Natural killer cell (primary cell): ENCODE measurements at regions of chr1 and their contacts with region 1.

Region 1: DNA sequence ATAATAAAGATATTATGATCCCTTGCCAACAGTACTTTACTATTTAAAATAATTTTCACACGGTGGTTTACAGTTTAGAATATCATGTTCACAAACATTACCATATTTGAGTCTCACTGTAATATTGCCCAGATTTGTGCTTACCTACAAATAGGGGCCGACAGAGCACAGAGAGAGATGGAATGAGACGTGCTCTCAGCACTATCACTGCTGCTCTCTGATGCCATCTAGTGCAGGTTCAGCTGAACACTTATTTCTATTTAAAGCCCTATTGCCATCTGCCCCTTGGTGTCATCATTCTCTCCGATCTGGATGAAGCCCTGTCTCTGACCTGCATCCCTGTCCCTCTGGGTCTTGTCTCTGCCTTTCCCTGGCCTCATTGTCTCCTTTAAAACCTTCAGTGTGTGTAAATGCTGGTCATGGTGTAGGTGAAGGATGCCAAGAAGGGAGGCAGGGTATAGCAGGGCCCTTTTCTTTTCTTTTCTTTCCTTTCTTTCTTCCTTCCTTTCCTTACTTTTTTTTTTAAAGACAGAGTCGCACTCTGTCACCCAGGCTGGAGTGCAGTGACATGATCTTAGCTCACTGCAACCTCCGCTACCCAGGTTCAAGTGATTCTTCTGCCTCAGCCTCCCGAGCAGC is 6.9 kb upstream of the GPATCH4 start:
- DNase-seq: peak; percentile 36 to 89
- ATAC-seq: peak; percentile 92 to 99 (median 98)
- H3K4me3 ChIP-seq: no peak overlapping the region
- H3K4me3 Mint-ChIP-seq: no peak overlapping the region
- H3K27ac ChIP-seq: no peak overlapping the region
- H3K27ac Mint-ChIP-seq: no peak overlapping the region
- H3K4me1 ChIP-seq: peaks cover 6% of the 10 kb centered on the region
- H3K4me1 Mint-ChIP-seq: peaks cover 8 to 9% of the 10 kb centered on the region in 2 donors
- H3K27me3 ChIP-seq: no peaks in the 10 kb centered on the region
- H3K27me3 Mint-ChIP-seq: peaks cover 3 to 6% of the 10 kb centered on the region in 2 donors
- CTCF ChIP-seq: peak; percentile 87

Region 2: GRCh38 chr1:156385534-156386031 is 222.6 kb before region 1 on chr1:
- intact Hi-C with region 1: loop called (anchors 1 kb)
- DNase-seq: peak; percentile 53 to 89
- ATAC-seq: peak; percentile 66 to 76 (median 73)
- H3K4me3 ChIP-seq: no peak overlapping the region
- H3K4me3 Mint-ChIP-seq: no peak overlapping the region
- H3K27ac ChIP-seq: no peak overlapping the region
- H3K27ac Mint-ChIP-seq: no peak overlapping the region
- H3K4me1 ChIP-seq: peaks cover 9% of the 10 kb centered on the region
- H3K4me1 Mint-ChIP-seq: peaks cover 8% of the 10 kb centered on the region in 2 donors
- H3K27me3 ChIP-seq: peaks cover 11% of the 10 kb centered on the region
- H3K27me3 Mint-ChIP-seq: peaks cover 20 to 32% of the 10 kb centered on the region in 2 donors
- CTCF ChIP-seq: peak; percentile 88

Region 3: GRCh38 chr1:156456622-156457465 is 151.3 kb before region 1 on chr1:
- intact Hi-C with region 1: loop called (anchors 1 kb)
- DNase-seq: peak; percentile 93 to 100
- ATAC-seq: peak; percentile 86 to 97 (median 87)
- H3K4me3 ChIP-seq: peak overlapping the region; percentile 86
- H3K4me3 Mint-ChIP-seq: peak overlapping the region; percentile 95
- H3K27ac ChIP-seq: peak overlapping the region; percentile 98
- H3K27ac Mint-ChIP-seq: peak overlapping the region; percentile 97 to 99
- H3K4me1 ChIP-seq: peaks cover 19% of the 10 kb centered on the region
- H3K4me1 Mint-ChIP-seq: peaks cover 11 to 20% of the 10 kb centered on the region in 2 donors
- H3K27me3 ChIP-seq: no peaks in the 10 kb centered on the region
- H3K27me3 Mint-ChIP-seq: no peaks in the 10 kb centered on the region
- CTCF ChIP-seq: no peak

Region 4: GRCh38 chr1:156480411-156481192 is 127.6 kb before region 1 on chr1:
- intact Hi-C with region 1: loop called (anchors 1 kb)
- DNase-seq: peak; percentile 68 to 91
- ATAC-seq: peak; percentile 80 to 89 (median 86)
- H3K4me3 ChIP-seq: no peak overlapping the region
- H3K4me3 Mint-ChIP-seq: peak overlapping the region; percentile 58
- H3K27ac ChIP-seq: peak overlapping the region; percentile 13
- H3K27ac Mint-ChIP-seq: peak overlapping the region; percentile 90 to 93
- H3K4me1 ChIP-seq: peaks cover 34% of the 10 kb centered on the region
- H3K4me1 Mint-ChIP-seq: peaks cover 37 to 61% of the 10 kb centered on the region in 2 donors
- H3K27me3 ChIP-seq: no peaks in the 10 kb centered on the region
- H3K27me3 Mint-ChIP-seq: no peaks in the 10 kb centered on the region
- CTCF ChIP-seq: peak; percentile 82

Region 5: DNA sequence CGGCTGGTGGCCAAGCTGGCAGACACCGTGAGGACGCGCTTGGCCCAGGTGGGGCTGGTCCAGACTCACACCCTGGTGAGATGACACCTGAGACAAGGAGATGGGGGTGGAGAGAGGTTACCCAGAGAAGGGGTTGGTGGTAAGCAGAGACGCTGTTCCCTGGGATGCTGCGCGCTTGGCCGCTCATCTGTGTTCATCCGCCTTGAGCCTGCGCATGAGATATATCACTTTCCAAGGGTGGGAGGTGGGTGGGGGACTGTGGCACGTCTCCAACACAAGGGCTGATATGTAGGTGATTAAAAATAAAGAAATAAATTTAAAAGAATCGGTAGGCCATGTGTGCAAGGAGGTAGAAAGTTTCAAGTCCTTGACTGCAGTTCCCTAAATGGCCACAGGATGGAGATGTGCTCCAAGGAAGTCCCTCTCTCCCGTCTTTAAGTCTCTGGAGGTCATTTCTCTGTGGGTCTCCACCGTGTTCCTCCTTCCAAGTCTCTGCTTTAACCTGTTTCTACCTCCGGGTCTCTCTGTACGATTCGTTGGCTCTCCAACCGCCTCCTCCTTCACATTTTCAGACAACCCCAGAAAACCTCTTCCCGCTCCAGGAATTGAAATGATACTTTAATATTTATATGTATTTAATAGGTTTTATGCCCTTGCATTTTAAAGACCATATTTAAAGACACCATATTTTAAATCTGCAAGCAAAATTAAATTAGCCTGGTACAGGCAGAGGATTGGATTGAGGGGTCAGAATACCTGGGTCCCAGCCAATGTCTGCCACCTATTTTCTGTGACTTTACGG is 24.1 kb before region 1 on chr1:
- intact Hi-C with region 1: loop called (anchors 1 kb)
- DNase-seq: peak; percentile 60 to 92
- ATAC-seq: peak; percentile 73 to 88 (median 82)
- H3K4me3 ChIP-seq: no peak overlapping the region
- H3K4me3 Mint-ChIP-seq: no peak overlapping the region
- H3K27ac ChIP-seq: no peak overlapping the region
- H3K27ac Mint-ChIP-seq: no peak overlapping the region
- H3K4me1 ChIP-seq: peaks cover 32% of the 10 kb centered on the region
- H3K4me1 Mint-ChIP-seq: peaks cover 6 to 24% of the 10 kb centered on the region in 2 donors
- H3K27me3 ChIP-seq: no peaks in the 10 kb centered on the region
- H3K27me3 Mint-ChIP-seq: no peaks in the 10 kb centered on the region
- CTCF ChIP-seq: peak; percentile 94